Gastrocnemius medialis (tissue), 4 donors: ENCODE measurements at regions of chr20 and their contacts with region 1.

Region 1: DNA sequence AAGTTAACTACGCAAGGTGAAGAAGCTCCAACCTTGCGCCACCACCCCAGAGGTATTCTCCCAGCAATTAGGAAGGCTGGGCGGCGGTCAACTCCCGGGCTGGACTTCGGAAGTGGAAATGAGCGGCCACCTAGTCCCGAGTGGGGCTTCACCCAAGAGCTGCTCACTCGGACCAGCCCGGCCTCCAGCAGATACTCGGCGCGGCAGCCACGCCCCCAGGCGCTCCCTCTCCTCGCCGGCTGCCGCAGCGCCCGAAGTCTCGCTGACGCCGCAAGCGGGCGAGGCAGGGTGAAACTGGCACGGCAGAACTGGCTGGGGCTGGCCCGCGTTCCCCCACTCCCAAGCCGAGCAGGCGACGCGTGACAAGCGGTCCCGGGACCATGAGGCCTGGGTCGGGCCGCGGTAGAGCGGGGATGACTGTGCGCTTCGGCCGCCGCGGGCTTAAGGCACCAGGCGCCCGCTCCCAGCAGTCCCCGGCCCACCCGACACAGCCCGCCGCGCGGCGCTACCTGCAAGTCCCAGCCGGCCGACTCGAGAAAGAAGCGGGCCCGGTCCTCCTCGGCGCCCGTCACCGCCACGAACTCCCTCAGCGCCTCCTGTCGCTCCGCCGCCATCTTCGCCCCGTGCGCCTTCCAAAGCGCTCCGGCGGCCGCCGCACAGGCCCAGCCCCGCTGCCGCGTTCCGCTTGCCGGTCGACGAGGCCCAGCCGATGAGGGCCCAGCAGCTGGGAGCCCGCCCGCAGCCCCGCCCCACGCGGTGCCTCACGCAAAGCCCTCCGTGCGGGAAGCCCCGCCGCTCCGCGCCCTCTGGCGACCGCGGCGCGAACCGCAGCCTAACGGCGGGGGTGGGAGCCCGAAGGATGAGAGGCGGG is at the start of gene NSFL1C:
- DNase-seq: peak; percentile 91 to 92
- ATAC-seq: peak; percentile 92 to 93
- H3K4me3 ChIP-seq: peak within 1 kb of the TSS; percentile 84 to 98 (median 96)
- H3K27ac ChIP-seq: peak within 1 kb of the TSS; percentile 92 to 98 (median 95)
- H3K4me1 ChIP-seq: peaks cover 25 to 39% of the 10 kb centered on the region in 2 donors
- H3K27me3 ChIP-seq: no peaks in the 10 kb centered on the region
- CTCF ChIP-seq: peak; percentile 85 to 100 (median 99)
- POLR2A ChIP-seq: peak; percentile 75 to 93
- total RNA-seq, gene NSFL1C: 68.0 to 91.4 (median 80.6) TPM

Region 2: DNA sequence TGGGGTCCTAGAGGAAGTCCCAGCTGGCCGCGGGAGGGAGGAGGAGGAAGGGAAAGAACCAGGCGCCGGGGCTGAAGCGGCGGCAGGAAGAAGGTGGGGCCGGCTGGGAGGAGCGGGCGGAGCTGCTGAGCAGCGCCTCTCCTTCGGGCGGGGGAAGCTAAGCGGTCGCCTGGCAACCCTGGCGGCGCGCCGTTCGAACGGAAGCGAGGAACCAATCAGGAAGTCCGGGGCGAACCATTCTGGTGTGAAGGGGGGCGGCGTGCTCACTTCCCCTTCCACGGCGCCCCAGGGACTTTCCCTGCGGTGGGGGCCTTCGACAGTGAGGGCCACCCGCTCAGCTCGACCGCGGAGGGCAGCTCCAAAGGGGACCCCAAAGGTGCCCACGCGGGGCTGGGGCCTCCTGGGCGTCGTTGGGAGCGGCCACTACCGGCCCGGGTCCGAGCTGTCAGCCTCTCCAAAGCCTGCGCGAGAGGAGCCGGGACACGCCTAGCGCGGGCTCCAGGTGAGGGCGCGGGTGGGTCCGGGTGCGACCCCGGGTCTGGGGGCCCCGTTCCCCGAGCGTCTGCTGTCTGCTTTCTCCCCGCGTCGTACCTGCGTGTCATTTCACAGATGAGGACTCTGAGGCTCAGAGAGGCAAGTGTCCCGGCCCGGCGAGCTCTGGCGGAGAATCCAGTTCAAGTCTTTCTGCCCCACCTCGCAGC is 632.8 kb before region 1 on chr20 and contains the start of gene FAM110A:
- in situ Hi-C with region 1: no loop called
- intact Hi-C with region 1: loop called (anchors 10 kb)
- DNase-seq: peak; percentile 91 to 95
- ATAC-seq: peak; percentile 92 to 96
- H3K4me3 ChIP-seq: peak within 1 kb of the TSS; percentile 75 to 90 (median 83)
- H3K27ac ChIP-seq: peak within 1 kb of the TSS; percentile 82 to 86 (median 84)
- H3K4me1 ChIP-seq: peaks cover 32% of the 10 kb centered on the region in 2 donors
- H3K27me3 ChIP-seq: no peaks in the 10 kb centered on the region
- CTCF ChIP-seq: no peak
- POLR2A ChIP-seq: no peak
- total RNA-seq, gene FAM110A: 0.25 to 6.2 (median 1.9) TPM

Region 3: DNA sequence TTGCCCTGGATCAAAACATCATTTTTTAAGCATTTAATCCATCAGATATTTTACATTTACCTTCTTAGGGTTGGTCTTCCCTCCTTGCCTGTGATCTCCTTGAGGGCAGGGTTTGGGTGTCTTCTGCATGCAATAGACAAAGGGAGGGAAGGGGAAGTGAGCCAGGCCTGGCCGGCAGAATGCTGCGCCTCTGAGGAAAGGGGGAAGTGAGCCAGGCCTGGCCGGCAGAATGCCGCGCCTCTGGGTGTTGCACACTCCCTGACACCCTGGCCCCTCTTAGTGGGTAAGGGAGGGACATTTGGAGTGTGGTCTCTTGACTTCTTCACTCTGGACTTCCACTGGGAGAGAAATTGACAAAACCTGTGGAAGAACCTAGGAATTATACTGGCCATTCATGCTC is 335.6 kb before region 1 on chr20:
- in situ Hi-C with region 1: loop called in 3 of 4 experiments (anchors 25 kb)
- intact Hi-C with region 1: no loop called
- DNase-seq: peak in 1 of 2 donors; percentile 23
- ATAC-seq: no peak
- H3K4me3 ChIP-seq: no peak overlapping the region
- H3K27ac ChIP-seq: peak overlapping the region in 1 of 4 donors; percentile 14
- H3K4me1 ChIP-seq: no peaks in the 10 kb centered on the region
- H3K27me3 ChIP-seq: no peaks in the 10 kb centered on the region
- CTCF ChIP-seq: no peak
- POLR2A ChIP-seq: no peak

Region 4: GRCh38 chr20:1325173-1326030 is 141.0 kb before region 1 on chr20:
- in situ Hi-C with region 1: no loop called
- intact Hi-C with region 1: loop called (anchors 2 kb)
- DNase-seq: peak; percentile 96 to 97
- ATAC-seq: peak; percentile 79
- H3K4me3 ChIP-seq: peak overlapping the region; percentile 63 to 94 (median 81)
- H3K27ac ChIP-seq: peak overlapping the region; percentile 93 to 99 (median 97)
- H3K4me1 ChIP-seq: peaks cover 53 to 69% of the 10 kb centered on the region in 2 donors
- H3K27me3 ChIP-seq: no peaks in the 10 kb centered on the region
- CTCF ChIP-seq: peak in 3 of 5 experiments; percentile 21 to 45 (median 44)
- POLR2A ChIP-seq: peak; percentile 92 to 94

Region 5: DNA sequence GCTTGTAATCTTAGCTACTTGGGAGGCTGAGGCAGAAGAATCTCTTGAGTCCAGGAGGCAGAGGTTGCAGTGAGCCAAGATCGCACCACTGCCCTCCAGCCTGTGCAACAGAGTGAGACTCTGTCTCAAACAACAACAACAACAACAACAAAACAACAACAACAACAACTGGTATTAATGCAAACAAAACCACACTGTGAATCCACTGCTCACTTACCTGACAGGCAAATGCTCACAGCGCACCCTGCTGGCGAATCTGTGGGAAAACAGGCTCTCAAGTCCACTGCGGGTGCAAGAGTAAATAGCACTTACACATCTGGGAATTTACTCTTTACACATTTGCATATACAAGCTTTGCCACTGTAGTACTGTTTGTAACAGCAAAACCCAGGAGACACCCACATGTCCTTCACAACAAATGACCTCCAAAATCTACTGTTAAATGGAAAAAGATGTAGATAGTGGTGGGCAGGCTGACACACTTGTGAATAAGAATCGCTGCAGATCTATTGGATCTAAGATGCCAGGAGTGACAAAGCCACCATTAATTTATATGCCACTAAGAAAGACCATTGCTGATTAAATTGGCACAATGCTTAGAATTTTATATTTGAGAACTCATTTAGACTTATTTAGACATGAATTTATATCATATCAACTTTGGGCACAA is 29.1 kb before region 1 on chr20:
- in situ Hi-C with region 1: no loop called
- intact Hi-C with region 1: no loop called
- DNase-seq: peak; percentile 41 to 59
- ATAC-seq: peak; percentile 69 to 74
- H3K4me3 ChIP-seq: no peak overlapping the region
- H3K27ac ChIP-seq: no peak overlapping the region
- H3K4me1 ChIP-seq: peaks cover 0 to 3% of the 10 kb centered on the region in 2 donors
- H3K27me3 ChIP-seq: no peaks in the 10 kb centered on the region
- CTCF ChIP-seq: peak; percentile 75 to 86 (median 81)
- POLR2A ChIP-seq: no peak

Region 6: GRCh38 chr20:1933465-1933870 is 467.0 kb after region 1 on chr20:
- in situ Hi-C with region 1: no loop called
- intact Hi-C with region 1: no loop called
- DNase-seq: peak in 1 of 2 donors; percentile 54
- ATAC-seq: peak; percentile 7 to 29
- H3K4me3 ChIP-seq: no peak overlapping the region
- H3K27ac ChIP-seq: peak overlapping the region in 1 of 4 donors; percentile 35
- H3K4me1 ChIP-seq: peaks cover 0 to 26% of the 10 kb centered on the region in 2 donors
- H3K27me3 ChIP-seq: no peaks in the 10 kb centered on the region
- CTCF ChIP-seq: no peak
- POLR2A ChIP-seq: no peak

Region 7: GRCh38 chr20:2470423-2471193 is 1004.2 kb after region 1 on chr20 and contains the start of gene SNRPB:
- in situ Hi-C with region 1: no loop called
- intact Hi-C with region 1: loop called (anchors 2 kb)
- DNase-seq: peak; percentile 96 to 97
- ATAC-seq: peak; percentile 98 to 99
- H3K4me3 ChIP-seq: peak within 1 kb of the TSS; percentile 77 to 95 (median 84)
- H3K27ac ChIP-seq: peak within 1 kb of the TSS; percentile 86 to 95 (median 88)
- H3K4me1 ChIP-seq: peaks cover 12 to 15% of the 10 kb centered on the region in 2 donors
- H3K27me3 ChIP-seq: no peaks in the 10 kb centered on the region
- CTCF ChIP-seq: no peak
- POLR2A ChIP-seq: peak; percentile 86 to 96
- total RNA-seq, gene SNRPB: 131 to 209 (median 190) TPM